GM18951 (cell line): ENCODE measurements at regions of chr7 and their contacts with region 1.

Region 1: GRCh38 chr7:108503112-108504026 is 22.6 kb downstream of the PNPLA8 start:
- POLR2A ChIP-seq: no peak

Region 2: GRCh38 chr7:107332488-107333269 is 1170.7 kb before region 1 on chr7:
- in situ Hi-C with region 1: no loop called
- POLR2A ChIP-seq: no peak

Region 3: DNA sequence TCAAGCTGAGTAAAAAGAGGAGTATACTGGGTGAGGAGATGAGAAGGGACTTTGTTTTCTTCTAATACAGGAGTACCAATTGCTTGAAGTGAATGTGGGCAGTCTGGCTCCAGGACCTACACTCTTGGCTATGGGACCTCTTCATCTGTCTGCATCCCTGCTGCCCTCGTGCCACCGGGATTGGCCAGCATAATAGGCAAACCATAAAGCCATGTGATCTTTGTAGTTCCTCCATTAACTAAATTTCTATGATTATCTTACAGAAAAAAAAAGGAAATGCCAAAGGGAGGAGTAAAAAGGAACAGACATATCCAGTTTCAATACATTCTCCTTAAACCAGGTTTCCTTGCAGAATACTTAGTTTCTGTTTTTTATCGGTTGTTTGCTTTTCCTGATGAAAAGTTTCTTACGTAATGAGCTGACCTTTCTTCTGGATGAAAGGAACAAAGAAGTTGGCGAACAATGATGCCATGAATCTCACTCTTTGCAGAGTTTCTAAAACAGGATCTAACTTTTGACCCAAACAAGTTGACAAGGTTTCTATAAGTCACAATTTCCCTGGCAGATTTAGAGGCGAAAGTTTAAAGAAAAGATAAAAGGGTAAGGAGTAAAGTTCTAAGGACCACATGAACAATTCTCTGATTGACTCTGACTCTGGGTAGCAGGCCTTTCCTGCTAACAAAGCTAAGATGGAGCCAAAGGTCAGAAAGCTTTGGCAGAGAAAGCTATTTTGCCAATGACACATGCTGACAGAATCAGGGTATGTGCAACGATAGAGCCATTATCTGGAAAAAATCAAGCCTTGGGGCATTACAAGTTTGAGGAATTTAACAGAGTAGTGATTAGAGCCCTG is 554.5 kb before region 1 on chr7:
- in situ Hi-C with region 1: no loop called
- POLR2A ChIP-seq: no peak

Region 4: GRCh38 chr7:108178398-108178797 is 325.0 kb before region 1 on chr7:
- in situ Hi-C with region 1: loop called (anchors 5 kb)
- POLR2A ChIP-seq: no peak

Region 5: DNA sequence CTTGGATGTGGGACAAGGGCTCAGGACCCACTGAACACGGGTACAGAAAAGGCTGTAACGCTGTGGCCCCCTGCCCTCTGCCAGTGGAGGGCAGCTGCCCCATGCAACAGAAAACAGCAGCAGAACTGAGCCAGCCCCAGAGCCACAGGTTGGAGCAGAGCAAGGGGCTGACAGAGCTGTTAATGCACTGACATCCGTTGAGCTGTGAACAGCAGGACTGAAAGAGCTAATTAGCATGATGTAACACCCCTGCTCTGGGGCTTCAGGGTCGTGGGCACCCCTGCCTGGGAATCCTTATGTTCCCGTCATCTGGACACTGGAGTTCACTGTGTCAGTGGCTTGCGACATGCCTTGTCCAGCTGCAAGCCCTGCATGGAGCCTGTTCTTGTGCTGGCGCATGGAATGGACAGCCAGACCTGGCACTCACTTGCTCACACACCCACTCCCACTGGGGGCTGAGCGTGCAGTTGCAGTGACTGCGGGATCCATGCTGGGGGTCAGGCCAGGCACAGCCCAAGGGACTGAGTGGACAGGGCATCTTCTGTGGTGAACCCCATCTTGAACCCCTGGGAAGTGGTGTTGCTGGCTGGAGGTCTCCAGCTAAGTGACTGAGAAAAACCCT is 360.0 kb after region 1 on chr7:
- in situ Hi-C with region 1: no loop called
- POLR2A ChIP-seq: no peak